IMR-90 (cell line): ENCODE measurements at regions of chr6 and their contacts with region 1.

Region 1: GRCh38 chr6:150079604-150080003 is 10.7 kb upstream of the ULBP3 start:
- DNase-seq: no peak
- ATAC-seq: no peak
- H3K4me3 ChIP-seq: no peak overlapping the region
- H3K27ac ChIP-seq: no peak overlapping the region
- H3K4me1 ChIP-seq: no peaks in the 10 kb centered on the region
- H3K27me3 ChIP-seq: peaks cover 16% of the 10 kb centered on the region
- CTCF ChIP-seq: no peak
- POLR2A ChIP-seq: no peak
- RAD21 ChIP-seq: no peak

Region 2: GRCh38 chr6:149761438-149761837 is 318.2 kb before region 1 on chr6:
- CTCF ChIA-PET with region 1: no interaction called
- POLR2A ChIA-PET with region 1: no interaction called
- dilution Hi-C with region 1: no loop called
- in situ Hi-C with region 1: no loop called
- intact Hi-C with region 1: no loop called
- DNase-seq: no peak
- ATAC-seq: no peak
- H3K4me3 ChIP-seq: no peak overlapping the region
- H3K27ac ChIP-seq: no peak overlapping the region
- H3K4me1 ChIP-seq: no peaks in the 10 kb centered on the region
- H3K27me3 ChIP-seq: no peaks in the 10 kb centered on the region
- CTCF ChIP-seq: no peak
- POLR2A ChIP-seq: no peak
- RAD21 ChIP-seq: no peak

Region 3: DNA sequence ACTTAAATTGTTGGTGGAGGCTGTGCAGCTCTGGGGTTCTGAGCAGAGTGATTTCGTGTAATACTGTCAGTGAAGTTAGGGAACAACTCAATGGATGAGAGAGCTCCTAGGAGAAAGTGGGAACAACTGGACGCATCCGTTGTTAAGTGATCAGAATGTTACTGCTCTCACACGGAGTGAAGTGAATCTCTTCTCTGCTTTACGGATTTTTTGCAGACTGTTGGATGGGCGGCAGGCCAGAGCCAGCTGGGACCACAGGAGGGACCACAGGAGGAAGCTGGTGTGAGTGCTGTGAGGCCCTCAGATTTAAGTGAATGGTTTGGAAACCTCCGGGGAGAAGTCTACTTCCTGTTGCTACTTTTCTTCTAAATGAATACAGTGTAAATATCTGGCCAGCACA is 39.6 kb after region 1 on chr6:
- CTCF ChIA-PET with region 1: no interaction called
- POLR2A ChIA-PET with region 1: no interaction called
- dilution Hi-C with region 1: no loop called
- in situ Hi-C with region 1: no loop called
- intact Hi-C with region 1: no loop called
- DNase-seq: no peak
- ATAC-seq: 0 out of 2 replicates have a peak, but pooled peaks have one; percentile 24
- H3K4me3 ChIP-seq: no peak overlapping the region
- H3K27ac ChIP-seq: no peak overlapping the region
- H3K4me1 ChIP-seq: no peaks in the 10 kb centered on the region
- H3K27me3 ChIP-seq: no peaks in the 10 kb centered on the region; the same call in 1 of the 2 replicates
- CTCF ChIP-seq: no peak
- POLR2A ChIP-seq: no peak
- RAD21 ChIP-seq: no peak

Region 4: DNA sequence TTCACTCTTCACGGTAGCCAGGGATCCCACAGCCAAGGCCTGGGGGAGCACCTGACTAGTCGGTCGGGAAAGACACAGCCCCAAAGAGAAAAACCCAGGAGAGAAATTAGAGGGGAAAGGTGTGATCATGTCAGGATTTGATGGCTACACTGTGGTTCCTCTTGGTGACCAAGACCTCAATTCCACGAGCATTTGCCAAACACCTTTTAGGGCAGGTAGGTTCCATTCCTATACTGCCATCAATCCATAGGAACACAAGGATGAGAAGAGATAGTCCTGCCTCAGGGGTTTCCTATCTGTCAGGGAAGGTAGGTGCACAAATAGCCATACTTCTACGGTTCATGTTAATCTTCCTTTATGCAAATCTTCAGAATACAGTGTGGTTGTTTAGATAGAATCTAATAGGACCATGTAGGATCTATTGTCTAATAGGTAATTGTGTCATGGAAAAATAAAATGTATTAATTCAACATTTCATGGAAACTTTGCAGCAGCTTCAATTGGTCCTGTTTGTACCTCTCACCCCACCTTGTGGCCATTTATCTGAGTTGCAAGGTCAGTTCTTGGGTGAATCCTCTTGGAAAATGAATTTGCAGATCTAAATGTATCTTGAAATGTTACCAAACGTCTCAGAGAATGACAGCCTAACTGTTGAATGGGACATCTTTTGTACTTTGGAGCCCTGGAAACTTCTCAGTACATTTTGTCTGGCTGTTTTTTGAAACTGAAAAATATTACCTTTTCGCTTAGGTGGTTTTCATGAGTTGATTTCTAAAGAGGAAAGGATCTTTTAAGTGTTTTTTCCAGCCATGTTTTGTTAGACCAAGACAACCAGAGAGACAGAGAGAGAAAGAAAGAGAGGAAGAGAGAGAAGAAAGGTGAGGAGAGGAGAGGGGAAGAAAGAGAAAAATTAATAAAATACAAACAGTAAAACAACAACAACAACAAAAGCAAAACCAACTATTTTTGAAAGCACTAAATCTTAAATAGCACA is 255.5 kb after region 1 on chr6:
- CTCF ChIA-PET with region 1: interaction called, 16 read pairs
- POLR2A ChIA-PET with region 1: no interaction called
- dilution Hi-C with region 1: no loop called
- in situ Hi-C with region 1: loop called (anchors 5 kb)
- intact Hi-C with region 1: loop called (anchors 1 kb)
- DNase-seq: peak; percentile 82
- ATAC-seq: peak; percentile 75
- H3K4me3 ChIP-seq: no peak overlapping the region
- H3K27ac ChIP-seq: no peak overlapping the region
- H3K4me1 ChIP-seq: no peaks in the 10 kb centered on the region
- H3K27me3 ChIP-seq: peaks cover 6% of the 10 kb centered on the region
- CTCF ChIP-seq: peak; percentile 89
- POLR2A ChIP-seq: no peak
- RAD21 ChIP-seq: peak; percentile 90

Region 5: DNA sequence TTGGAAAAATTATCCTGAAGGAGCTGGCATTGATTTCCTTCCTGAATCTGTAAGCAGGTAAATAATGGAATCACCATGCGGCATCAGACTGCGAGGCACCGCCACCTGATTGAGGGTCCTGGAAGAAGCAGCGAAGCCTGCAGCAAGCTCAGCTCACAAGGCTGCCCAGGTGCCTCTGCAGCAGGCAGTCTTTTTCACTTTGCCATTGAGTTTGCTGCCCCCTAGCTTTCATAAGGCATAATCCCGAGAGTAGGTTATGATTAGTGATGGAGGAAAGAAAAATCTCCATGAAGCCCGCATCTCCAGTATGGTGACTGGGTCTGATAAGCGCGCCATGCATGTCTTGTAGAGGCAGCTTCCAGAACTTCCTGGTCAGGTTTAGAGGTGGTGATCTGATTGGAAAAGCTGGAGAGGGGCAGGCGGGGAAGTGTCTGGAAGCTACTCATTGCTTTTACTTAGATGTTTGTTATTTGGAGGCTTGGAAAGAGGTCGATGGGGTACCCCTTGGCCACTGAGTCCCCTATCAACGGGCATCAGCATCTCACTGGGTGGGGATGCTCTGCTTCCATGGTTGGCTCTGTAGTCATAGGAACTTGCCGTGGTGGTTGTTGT is 315.9 kb after region 1 on chr6:
- CTCF ChIA-PET with region 1: interaction called, 8 read pairs
- POLR2A ChIA-PET with region 1: no interaction called
- dilution Hi-C with region 1: no loop called
- in situ Hi-C with region 1: no loop called
- intact Hi-C with region 1: loop called (anchors 1 kb)
- DNase-seq: peak; percentile 51
- ATAC-seq: peak; percentile 88
- H3K4me3 ChIP-seq: no peak overlapping the region
- H3K27ac ChIP-seq: no peak overlapping the region
- H3K4me1 ChIP-seq: no peaks in the 10 kb centered on the region
- H3K27me3 ChIP-seq: no peaks in the 10 kb centered on the region; the same call in none of the 2 replicates
- CTCF ChIP-seq: peak; percentile 66
- POLR2A ChIP-seq: no peak
- RAD21 ChIP-seq: peak; percentile 65